Esophagus squamous epithelium (tissue), 5 donors: ENCODE measurements at regions of chr12 and their contacts with region 1.

Region 1: DNA sequence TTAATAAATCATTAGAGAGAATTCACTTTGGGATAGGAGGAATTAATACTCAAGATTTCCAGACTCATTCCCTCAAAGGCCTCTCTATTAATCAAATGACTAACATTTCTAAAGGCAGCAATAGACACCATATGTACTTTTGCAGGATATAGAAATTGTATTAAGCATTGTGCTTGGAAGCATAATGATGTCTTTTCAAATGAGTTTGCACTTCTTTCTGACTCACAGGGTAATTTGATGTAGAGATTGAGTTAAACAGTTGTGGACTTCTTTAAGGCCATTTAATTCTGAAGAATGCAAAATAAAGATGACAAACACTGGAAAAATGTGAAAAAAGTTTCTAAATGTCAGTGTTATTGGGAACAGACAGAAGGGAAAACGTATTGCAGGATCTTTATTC is 63.4 kb upstream of the CSRP2 start:
- DNase-seq: no peak
- H3K4me3 ChIP-seq: no peak overlapping the region
- H3K27ac ChIP-seq: no peak overlapping the region
- H3K4me1 ChIP-seq: no peaks in the 10 kb centered on the region
- H3K27me3 ChIP-seq: no peaks in the 10 kb centered on the region
- CTCF ChIP-seq: no peak
- POLR2A ChIP-seq: no peak

Region 2: GRCh38 chr12:77010691-77011548 is 68.7 kb after region 1 on chr12:
- intact Hi-C with region 1: loop called (anchors 10 kb)
- DNase-seq: peak; percentile 1
- H3K4me3 ChIP-seq: no peak overlapping the region
- H3K27ac ChIP-seq: no peak overlapping the region
- H3K4me1 ChIP-seq: peaks cover 0 to 5% (median 0%) of the 10 kb centered on the region in 3 donors
- H3K27me3 ChIP-seq: no peaks in the 10 kb centered on the region
- CTCF ChIP-seq: peak; percentile 67 to 92 (median 86)
- POLR2A ChIP-seq: no peak